GM12878 (cell line): ENCODE measurements at regions of chr11 and their contacts with region 1.

Region 1: GRCh38 chr11:128757235-128757711 is 63.4 kb downstream of the FLI1 start:
- DNase-seq: peak; percentile 93
- ATAC-seq: peak; percentile 89
- H3K4me3 ChIP-seq: no peak overlapping the region
- H3K27ac ChIP-seq: peak overlapping the region; percentile 87
- H3K4me1 ChIP-seq: peaks cover 31% of the 10 kb centered on the region
- H3K27me3 ChIP-seq: no peaks in the 10 kb centered on the region
- CTCF ChIP-seq: peak; percentile 81 to 94 (median 92)
- EP300 ChIP-seq: 0 out of 4 replicates have a peak, but pooled peaks of 1 of the 2 experiments have one; percentile 56
- POLR2A ChIP-seq: no peak
- RAD21 ChIP-seq: peak; percentile 90

Region 2: GRCh38 chr11:128157423-128158298 is 599.6 kb before region 1 on chr11:
- CTCF ChIA-PET with region 1: interaction called, 11 read pairs
- POLR2A ChIA-PET with region 1: no interaction called
- RAD21 ChIA-PET with region 1: interaction called, 4 read pairs
- SMC1A ChIA-PET with region 1: interaction called, 3 read pairs
- in situ Hi-C with region 1: no loop called
- intact Hi-C with region 1: no loop called
- DNase-seq: peak; percentile 51
- ATAC-seq: peak; percentile 94
- H3K4me3 ChIP-seq: no peak overlapping the region
- H3K27ac ChIP-seq: no peak overlapping the region
- H3K4me1 ChIP-seq: no peaks in the 10 kb centered on the region
- H3K27me3 ChIP-seq: peaks cover 2 to 3% of the 10 kb centered on the region in 2 experiments; a peak in 2 of 4 replicates
- CTCF ChIP-seq: peak; percentile 58 to 92 (median 73)
- EP300 ChIP-seq: no peak
- POLR2A ChIP-seq: no peak
- RAD21 ChIP-seq: peak; percentile 61

Region 3: GRCh38 chr11:128304116-128304515 is 453.2 kb before region 1 on chr11:
- CTCF ChIA-PET with region 1: no interaction called
- POLR2A ChIA-PET with region 1: no interaction called
- RAD21 ChIA-PET with region 1: no interaction called
- SMC1A ChIA-PET with region 1: no interaction called
- in situ Hi-C with region 1: no loop called
- intact Hi-C with region 1: no loop called
- DNase-seq: no peak
- ATAC-seq: no peak
- H3K4me3 ChIP-seq: no peak overlapping the region
- H3K27ac ChIP-seq: no peak overlapping the region
- H3K4me1 ChIP-seq: peaks cover 48% of the 10 kb centered on the region
- H3K27me3 ChIP-seq: no peaks in the 10 kb centered on the region
- CTCF ChIP-seq: no peak
- EP300 ChIP-seq: no peak
- POLR2A ChIP-seq: no peak
- RAD21 ChIP-seq: no peak

Region 4: DNA sequence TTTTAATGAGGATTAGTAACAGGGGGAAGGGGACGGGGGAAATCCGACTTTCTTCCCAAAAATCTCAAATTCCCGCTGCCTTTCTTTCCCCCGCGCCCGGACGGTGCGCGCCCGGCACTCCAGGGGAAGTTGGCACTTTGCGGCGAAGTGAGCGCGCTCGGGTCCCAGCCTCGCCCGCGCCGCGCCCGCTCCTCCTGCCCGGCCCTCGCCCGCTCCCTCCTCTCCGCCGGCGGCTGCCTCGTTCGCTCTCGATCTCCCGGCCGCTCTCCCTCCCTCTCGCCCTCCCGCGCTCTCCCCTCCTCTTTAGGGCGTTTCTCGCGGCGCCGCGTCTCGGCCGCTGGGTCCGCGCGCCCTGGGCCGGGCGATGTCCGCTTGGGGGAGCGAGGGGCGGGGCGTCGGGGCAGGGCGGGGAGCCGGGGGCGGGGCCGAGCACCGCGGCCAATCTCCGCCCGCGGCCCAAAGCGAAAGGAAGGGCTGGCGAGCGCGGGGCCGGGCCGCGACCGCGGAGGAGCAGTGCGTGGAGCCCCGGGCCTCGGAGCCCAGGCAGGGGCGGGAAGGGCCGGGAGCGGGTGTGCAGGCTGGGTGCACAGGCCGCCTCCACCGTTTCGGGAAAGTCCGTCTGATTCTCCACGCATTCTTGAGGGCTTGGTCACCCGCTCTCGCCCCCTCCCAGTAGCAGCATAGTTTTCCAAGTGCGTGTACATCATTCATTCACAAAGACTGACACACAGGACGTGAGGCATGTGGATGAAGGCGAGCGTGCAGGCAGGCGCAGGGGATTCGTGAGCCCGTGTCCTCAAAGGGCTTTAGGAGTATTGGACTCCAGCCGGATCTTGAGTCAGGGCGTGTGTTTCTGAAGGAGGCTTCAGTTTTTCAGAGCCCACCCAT is 235.0 kb before region 1 on chr11:
- CTCF ChIA-PET with region 1: interaction called, 3 read pairs
- POLR2A ChIA-PET with region 1: interaction called, 4 read pairs
- RAD21 ChIA-PET with region 1: interaction called, 8 read pairs
- SMC1A ChIA-PET with region 1: interaction called, 3 read pairs
- in situ Hi-C with region 1: no loop called
- intact Hi-C with region 1: loop called (anchors 5 kb)
- DNase-seq: peak; percentile 59
- ATAC-seq: peak; percentile 85
- H3K4me3 ChIP-seq: peak overlapping the region; percentile 96
- H3K27ac ChIP-seq: peak overlapping the region; percentile 96
- H3K4me1 ChIP-seq: peaks cover 17% of the 10 kb centered on the region
- H3K27me3 ChIP-seq: no peaks in the 10 kb centered on the region
- CTCF ChIP-seq: no peak
- EP300 ChIP-seq: no peak
- POLR2A ChIP-seq: peak; percentile 97
- RAD21 ChIP-seq: 0 out of 2 replicates have a peak, but pooled peaks have one; percentile 9

Region 5: DNA sequence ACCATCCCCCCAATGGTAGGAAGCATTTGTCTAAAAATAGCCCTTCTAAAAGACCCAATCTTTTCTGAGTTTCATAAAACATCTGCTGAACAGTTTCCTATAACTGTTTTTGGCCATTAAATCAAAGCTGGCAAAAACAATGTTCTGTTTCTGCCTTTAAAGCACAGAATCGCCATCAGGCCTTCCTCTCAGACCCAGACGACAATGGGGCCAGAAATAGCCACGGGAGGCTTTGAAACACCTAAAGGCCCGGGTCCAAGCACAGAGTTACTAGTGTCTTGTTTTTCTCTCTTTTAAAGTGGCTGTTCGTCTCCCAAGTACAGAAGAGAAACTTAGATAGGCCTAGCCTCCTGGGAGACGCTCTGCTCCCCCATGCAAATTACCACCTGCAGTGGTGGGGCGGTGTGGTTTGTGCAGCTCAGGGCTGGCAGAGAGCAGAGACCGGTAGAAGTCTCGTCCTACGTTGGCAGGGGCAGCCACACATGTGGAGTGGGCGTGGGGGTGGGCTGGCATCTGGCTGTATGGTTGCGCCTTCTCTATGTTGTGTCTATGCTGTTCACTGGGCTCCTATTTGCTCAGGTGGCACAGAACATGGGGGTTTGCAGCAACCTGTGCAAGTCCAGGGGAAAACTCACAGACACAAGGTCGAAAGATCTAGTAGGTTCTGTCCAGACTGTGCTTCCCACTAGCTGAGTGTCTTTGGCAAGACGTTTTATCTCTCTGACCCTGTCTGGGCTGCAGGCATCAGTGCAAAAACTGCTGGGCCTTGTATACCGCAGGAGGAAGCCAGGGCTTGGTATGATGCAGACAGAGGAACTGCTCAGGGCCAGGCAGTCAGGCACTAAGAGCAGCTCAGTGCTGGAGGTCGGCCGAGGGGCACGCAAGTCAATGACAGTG is 146.3 kb before region 1 on chr11:
- CTCF ChIA-PET with region 1: interaction called, 17 read pairs
- POLR2A ChIA-PET with region 1: no interaction called
- RAD21 ChIA-PET with region 1: interaction called, 18 read pairs
- SMC1A ChIA-PET with region 1: interaction called, 24 read pairs
- in situ Hi-C with region 1: no loop called
- intact Hi-C with region 1: no loop called
- DNase-seq: peak; percentile 93
- ATAC-seq: peak; percentile 97
- H3K4me3 ChIP-seq: peak overlapping the region; percentile 55
- H3K27ac ChIP-seq: peak overlapping the region; percentile 98
- H3K4me1 ChIP-seq: peaks cover 36% of the 10 kb centered on the region
- H3K27me3 ChIP-seq: no peaks in the 10 kb centered on the region
- CTCF ChIP-seq: no peak
- EP300 ChIP-seq: peak; percentile 42 to 86; a peak in 3 of 4 replicates
- POLR2A ChIP-seq: peak; percentile 69
- RAD21 ChIP-seq: no peak; the same call in 1 of the 2 replicates

Region 6: DNA sequence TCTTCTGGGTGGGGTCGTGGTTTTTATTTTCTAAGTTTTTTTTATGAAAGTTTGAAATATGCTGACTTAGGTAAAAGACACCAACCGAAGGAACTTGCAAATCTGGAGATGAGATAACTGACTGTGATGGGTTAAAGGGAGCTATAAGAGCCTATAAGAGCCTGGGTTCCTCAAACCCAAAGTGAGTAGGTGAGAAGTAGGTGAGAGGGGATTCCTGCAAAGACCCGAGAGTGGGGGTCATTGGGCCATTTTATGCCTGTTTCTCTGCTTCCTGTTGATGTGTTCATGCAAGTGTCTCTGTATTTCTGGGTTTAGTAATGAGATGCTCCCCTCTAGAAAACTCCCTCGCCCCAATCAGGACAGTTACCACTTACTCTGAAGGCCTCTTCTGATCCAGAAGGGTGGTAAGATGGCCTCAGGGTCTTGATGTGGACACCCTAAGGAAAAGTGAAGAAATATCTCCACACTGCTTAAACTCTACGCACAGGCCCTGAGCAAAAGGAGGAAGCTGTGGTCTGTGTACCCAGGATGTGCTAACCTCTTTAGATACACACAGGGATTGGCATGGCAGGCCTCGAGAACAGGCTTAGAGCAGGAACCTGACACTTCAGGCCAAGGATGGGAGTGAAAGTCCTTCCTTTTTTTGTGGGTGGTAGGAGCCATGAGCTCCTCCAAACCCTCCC is 61.6 kb before region 1 on chr11:
- CTCF ChIA-PET with region 1: interaction called, 8 read pairs
- POLR2A ChIA-PET with region 1: interaction called, 3 read pairs
- RAD21 ChIA-PET with region 1: interaction called, 10 read pairs
- SMC1A ChIA-PET with region 1: interaction called, 8 read pairs
- in situ Hi-C with region 1: no loop called
- intact Hi-C with region 1: loop called (anchors 1 kb)
- DNase-seq: no peak
- ATAC-seq: peak; percentile 40
- H3K4me3 ChIP-seq: peak overlapping the region; percentile 95
- H3K27ac ChIP-seq: peak overlapping the region; percentile 81
- H3K4me1 ChIP-seq: peaks cover 28% of the 10 kb centered on the region
- H3K27me3 ChIP-seq: no peaks in the 10 kb centered on the region
- CTCF ChIP-seq: no peak
- EP300 ChIP-seq: no peak
- POLR2A ChIP-seq: no peak
- RAD21 ChIP-seq: no peak

Region 7: GRCh38 chr11:128725630-128726319 is 31.5 kb before region 1 on chr11:
- CTCF ChIA-PET with region 1: interaction called, 15 read pairs
- POLR2A ChIA-PET with region 1: interaction called, 4 read pairs
- RAD21 ChIA-PET with region 1: interaction called, 83 read pairs
- SMC1A ChIA-PET with region 1: interaction called, 12 read pairs
- in situ Hi-C with region 1: no loop called
- intact Hi-C with region 1: no loop called
- DNase-seq: peak; percentile 89
- ATAC-seq: peak; percentile 74
- H3K4me3 ChIP-seq: peak overlapping the region; percentile 53; the same call in 1 of the 2 replicates
- H3K27ac ChIP-seq: peak overlapping the region; percentile 79
- H3K4me1 ChIP-seq: peaks cover 90% of the 10 kb centered on the region
- H3K27me3 ChIP-seq: no peaks in the 10 kb centered on the region
- CTCF ChIP-seq: no peak
- EP300 ChIP-seq: peak; percentile 43 to 85; a peak in 3 of 4 replicates
- POLR2A ChIP-seq: no peak
- RAD21 ChIP-seq: no peak

Region 8: DNA sequence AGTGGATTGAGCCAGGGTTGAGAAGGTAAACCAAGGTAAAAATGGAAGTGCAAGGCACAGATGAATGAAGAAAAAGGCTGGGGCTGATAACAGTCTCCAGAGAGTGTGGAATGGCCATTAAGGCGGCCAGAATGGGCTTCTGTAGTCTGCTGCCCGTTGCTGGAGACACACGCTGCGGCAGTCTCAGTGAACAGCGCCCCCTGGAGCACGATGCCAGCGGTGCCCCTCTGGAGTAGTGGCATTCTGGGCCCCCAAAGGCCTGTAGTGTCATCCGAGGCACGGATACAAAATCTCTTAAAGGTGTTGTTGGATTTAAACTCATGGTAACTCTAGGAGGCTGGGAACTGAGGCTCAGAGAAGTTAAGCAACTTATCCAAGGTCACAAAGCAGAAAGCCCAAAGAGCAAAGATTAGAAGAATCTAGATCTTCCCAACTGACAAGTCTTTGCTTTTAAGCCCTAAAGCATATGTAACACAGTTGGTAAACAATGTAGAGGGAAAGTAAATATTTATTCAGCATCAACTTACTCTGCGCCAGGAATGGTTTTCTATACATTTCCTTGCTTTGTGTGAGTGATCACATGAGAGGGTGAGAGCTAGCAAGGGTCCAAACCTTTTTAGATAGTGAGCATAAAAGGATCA is 91.7 kb after region 1 on chr11:
- CTCF ChIA-PET with region 1: interaction called, 24 read pairs
- POLR2A ChIA-PET with region 1: no interaction called
- RAD21 ChIA-PET with region 1: interaction called, 6 read pairs
- SMC1A ChIA-PET with region 1: interaction called, 6 read pairs
- in situ Hi-C with region 1: no loop called
- intact Hi-C with region 1: no loop called
- DNase-seq: no peak
- ATAC-seq: peak; percentile 100
- H3K4me3 ChIP-seq: no peak overlapping the region
- H3K27ac ChIP-seq: no peak overlapping the region
- H3K4me1 ChIP-seq: peaks cover 4% of the 10 kb centered on the region; the same call in 1 of the 2 replicates
- H3K27me3 ChIP-seq: no peaks in the 10 kb centered on the region
- CTCF ChIP-seq: peak; percentile 81 to 91 (median 88)
- EP300 ChIP-seq: no peak
- POLR2A ChIP-seq: no peak
- RAD21 ChIP-seq: peak; percentile 68